Aorta (tissue), 5 donors: ENCODE measurements at regions of chr15 and their contacts with region 1.

Region 1: GRCh38 chr15:37880009-37880834 is 54.2 kb upstream of the TMCO5A start:
- DNase-seq: no peak
- ATAC-seq: no peak
- H3K4me3 ChIP-seq: no peak overlapping the region
- H3K27ac ChIP-seq: no peak overlapping the region
- H3K4me1 ChIP-seq: peaks cover 4 to 7% of the 10 kb centered on the region in 2 donors
- H3K27me3 ChIP-seq: no peaks in the 10 kb centered on the region

Region 2: DNA sequence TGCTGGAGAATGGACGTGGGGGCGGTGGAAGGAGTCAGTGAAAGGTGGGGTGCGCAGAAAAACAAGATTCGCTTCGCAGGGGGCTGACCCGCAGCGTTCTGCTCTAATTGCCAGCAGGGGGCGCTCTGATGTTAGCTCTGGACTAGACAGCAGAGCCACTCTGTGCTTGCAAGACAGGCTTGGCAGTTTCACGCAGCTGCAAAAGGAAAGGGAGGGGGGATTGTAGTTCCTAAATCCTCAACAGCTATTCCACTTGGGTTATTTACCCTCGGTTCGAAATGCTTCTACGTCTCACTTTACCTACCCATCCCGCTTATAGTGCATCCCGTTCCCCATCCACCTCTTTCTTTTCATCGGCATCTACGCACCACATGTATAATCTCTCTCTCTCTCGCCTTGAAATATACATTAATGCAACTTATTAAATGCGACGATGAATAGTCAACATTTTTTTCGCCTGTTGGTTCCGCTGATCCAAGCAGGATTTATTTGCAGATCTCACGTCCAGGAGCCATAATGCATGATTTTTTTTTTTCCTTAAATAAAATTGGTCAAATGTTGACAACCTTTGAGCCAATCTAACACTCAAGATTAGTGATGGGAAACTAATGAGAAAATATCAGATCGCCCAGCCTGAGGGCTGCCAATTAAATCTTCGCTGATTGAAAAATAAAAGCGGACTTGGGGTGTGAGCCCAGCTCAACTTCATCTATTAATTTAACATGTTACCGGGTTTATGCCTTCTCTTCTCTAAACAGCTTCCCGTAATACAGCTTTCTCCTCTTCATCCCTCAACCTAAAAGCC is 996.3 kb before region 1 on chr15:
- intact Hi-C with region 1: loop called in 1 of 2 experiments (anchors 10 kb)
- DNase-seq: peak; percentile 90 to 94
- ATAC-seq: peak; percentile 90
- H3K4me3 ChIP-seq: peak overlapping the region; percentile 44 to 51
- H3K27ac ChIP-seq: no peak overlapping the region
- H3K4me1 ChIP-seq: no peaks in the 10 kb centered on the region
- H3K27me3 ChIP-seq: no peaks in the 10 kb centered on the region

Region 3: GRCh38 chr15:36896949-36897348 is 983.3 kb before region 1 on chr15:
- intact Hi-C with region 1: loop called in 1 of 2 experiments (anchors 10 kb)
- DNase-seq: no peak
- ATAC-seq: no peak
- H3K4me3 ChIP-seq: no peak overlapping the region
- H3K27ac ChIP-seq: no peak overlapping the region
- H3K4me1 ChIP-seq: no peaks in the 10 kb centered on the region
- H3K27me3 ChIP-seq: no peaks in the 10 kb centered on the region

Region 4: GRCh38 chr15:37134699-37135131 is 745.5 kb before region 1 on chr15:
- intact Hi-C with region 1: loop called in 1 of 2 experiments (anchors 10 kb)
- DNase-seq: no peak
- ATAC-seq: peak; percentile 85
- H3K4me3 ChIP-seq: no peak overlapping the region
- H3K27ac ChIP-seq: no peak overlapping the region
- H3K4me1 ChIP-seq: no peaks in the 10 kb centered on the region
- H3K27me3 ChIP-seq: no peaks in the 10 kb centered on the region

Region 5: GRCh38 chr15:37140531-37141058 is 739.6 kb before region 1 on chr15:
- intact Hi-C with region 1: loop called (anchors 10 kb)
- DNase-seq: no peak
- ATAC-seq: no peak
- H3K4me3 ChIP-seq: no peak overlapping the region
- H3K27ac ChIP-seq: no peak overlapping the region
- H3K4me1 ChIP-seq: no peaks in the 10 kb centered on the region
- H3K27me3 ChIP-seq: no peaks in the 10 kb centered on the region

Region 6: DNA sequence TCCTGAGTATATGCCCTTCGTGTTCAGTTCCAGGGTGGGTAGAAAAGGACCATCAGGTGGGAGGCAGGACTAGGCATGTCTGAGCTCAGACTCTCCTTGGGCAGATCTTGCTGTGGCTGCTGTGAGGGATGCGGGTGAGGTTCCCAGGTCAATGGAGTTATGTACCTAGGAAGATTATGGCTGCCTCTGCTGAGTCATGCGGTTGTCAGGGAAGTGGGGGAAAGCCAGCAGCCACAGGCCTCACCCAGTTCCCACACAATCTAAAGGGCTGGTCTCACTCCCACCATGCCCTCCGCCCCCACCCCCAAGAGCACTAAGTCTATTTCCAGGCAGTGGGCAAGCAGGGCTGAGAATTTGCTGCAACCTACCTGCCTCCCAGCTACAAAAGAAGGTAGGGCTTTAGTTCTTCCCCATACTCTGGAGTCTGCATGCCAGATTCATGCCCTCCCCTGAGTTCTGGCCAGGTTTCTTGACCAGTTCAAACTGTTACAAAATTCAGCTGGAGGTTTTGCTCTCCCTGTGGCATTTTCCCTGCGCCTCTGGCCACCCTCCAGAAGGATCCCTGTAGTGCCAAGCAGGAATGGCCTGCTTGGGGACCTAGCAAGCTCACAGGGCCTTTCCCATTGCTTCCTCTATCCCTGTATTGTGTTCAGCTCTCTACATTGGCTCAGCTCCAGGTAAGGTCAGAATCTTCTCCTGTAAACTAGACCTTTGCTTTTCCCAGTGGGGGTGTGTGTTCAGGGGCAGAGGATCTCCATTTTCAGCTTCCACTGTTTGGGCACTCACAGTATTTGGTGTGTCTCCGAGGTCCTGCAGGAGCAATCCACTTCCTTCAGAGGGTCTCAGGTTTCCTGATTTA is 41.5 kb after region 1 on chr15:
- intact Hi-C with region 1: no loop called
- DNase-seq: no peak
- ATAC-seq: no peak
- H3K4me3 ChIP-seq: no peak overlapping the region
- H3K27ac ChIP-seq: no peak overlapping the region
- H3K4me1 ChIP-seq: no peaks in the 10 kb centered on the region
- H3K27me3 ChIP-seq: no peaks in the 10 kb centered on the region

Region 7: GRCh38 chr15:38017721-38018120 is 137.5 kb after region 1 on chr15:
- intact Hi-C with region 1: no loop called
- DNase-seq: peak in 1 of 2 donors; percentile 67
- ATAC-seq: no peak
- H3K4me3 ChIP-seq: no peak overlapping the region
- H3K27ac ChIP-seq: no peak overlapping the region
- H3K4me1 ChIP-seq: no peaks in the 10 kb centered on the region
- H3K27me3 ChIP-seq: no peaks in the 10 kb centered on the region

Region 8: DNA sequence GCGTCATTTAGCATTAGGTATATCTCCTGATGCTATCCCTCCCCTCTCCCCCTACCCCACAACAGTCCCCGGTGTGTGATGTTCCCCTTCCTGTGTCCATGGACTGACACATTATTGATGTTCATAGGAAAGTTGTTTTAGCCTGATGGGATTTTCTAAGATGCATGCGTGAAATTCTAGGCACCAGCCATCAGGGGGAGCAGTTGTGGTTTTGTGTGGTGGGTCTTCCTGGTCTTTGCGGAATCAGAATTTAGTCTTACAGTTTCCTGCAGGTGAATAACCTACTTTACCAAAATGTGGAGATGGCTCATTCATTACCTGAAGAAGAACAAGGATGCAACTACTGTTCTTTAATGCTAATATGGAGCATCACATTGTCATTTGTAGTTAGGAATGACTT is 1245.7 kb after region 1 on chr15:
- intact Hi-C with region 1: no loop called
- DNase-seq: no peak
- ATAC-seq: no peak
- H3K4me3 ChIP-seq: no peak overlapping the region
- H3K27ac ChIP-seq: no peak overlapping the region
- H3K4me1 ChIP-seq: peaks cover 0 to 4% of the 10 kb centered on the region in 2 donors
- H3K27me3 ChIP-seq: no peaks in the 10 kb centered on the region